ENCODE measurements at regions of chr22 and their contacts with region 1.

Region 1: DNA sequence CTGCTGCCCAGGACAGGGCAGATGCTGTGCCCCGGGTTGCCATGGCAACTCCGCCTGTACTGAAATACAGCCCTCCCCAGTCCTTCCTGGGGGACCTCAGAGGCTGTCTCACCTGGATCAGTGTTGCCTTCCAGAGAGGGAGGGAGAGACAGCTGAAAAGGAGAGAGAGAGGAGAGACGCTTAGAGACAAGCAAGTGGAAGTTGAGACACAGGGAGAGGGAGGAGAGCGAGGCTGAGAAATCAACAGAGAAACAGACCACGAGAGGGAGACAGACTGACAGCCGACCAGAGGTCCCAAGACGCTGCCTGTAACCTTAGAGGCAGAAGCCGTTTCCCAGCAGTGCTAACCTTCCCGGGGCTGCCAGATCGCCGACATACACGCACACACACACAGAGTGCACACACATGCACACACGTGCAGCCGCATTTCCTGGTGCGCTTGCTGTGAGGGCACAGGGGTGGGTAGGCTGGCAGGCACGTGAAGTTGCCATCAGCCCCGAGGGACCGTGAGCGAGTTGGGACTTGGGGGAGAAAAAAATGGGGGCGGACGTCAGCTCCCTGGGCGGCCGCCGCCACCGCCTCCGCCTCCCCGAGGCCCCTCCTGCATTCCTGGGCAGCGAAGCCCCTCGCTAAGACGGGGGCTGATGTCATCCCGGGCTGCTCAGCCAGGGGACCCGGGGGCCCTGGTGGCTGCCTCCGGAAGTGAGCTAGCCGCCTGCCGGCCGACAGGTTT is 88.6 kb upstream of the CRYBB3 start:
- DNase-seq: no peak
- H3K4me3 ChIP-seq: peak overlapping the region; percentile 36 to 68 (median 64)
- H3K27ac ChIP-seq: peak overlapping the region; percentile 83 to 92 (median 87)
- H3K4me1 ChIP-seq: peaks cover 28 to 60% (median 40%) of the 10 kb centered on the region in 3 donors
- H3K27me3 ChIP-seq: no peaks in the 10 kb centered on the region
- CTCF ChIP-seq: peak; percentile 28 to 65 (median 53)
- POLR2A ChIP-seq: no peak

Region 2: DNA sequence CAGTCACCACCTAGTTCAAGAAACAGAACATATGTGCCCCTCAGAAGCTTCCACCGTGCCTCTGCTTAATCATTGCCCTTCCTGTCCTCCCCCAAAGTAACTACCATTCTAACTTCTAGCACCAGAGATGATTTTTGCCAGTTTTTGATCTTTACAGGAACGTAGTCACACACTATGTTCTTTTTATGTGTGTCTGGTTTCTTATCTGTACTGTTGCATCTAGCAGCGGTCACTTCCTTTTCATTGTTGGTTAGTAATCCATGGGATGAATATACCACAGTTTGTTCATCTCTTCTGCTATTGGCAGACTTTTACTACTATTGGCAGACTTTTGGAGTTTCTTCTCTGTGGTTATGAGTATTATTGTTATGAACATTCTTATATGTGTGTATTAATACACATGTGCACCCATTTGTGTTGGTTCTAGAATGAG is 805.7 kb before region 1 on chr22:
- intact Hi-C with region 1: no loop called
- DNase-seq: no peak
- H3K4me3 ChIP-seq: peak overlapping the region in 1 of 4 donors; percentile 3
- H3K27ac ChIP-seq: peak overlapping the region; percentile 56 to 86 (median 78)
- H3K4me1 ChIP-seq: peaks cover 32 to 73% (median 36%) of the 10 kb centered on the region in 3 donors
- H3K27me3 ChIP-seq: no peaks in the 10 kb centered on the region
- CTCF ChIP-seq: no peak
- POLR2A ChIP-seq: no peak

Region 3: DNA sequence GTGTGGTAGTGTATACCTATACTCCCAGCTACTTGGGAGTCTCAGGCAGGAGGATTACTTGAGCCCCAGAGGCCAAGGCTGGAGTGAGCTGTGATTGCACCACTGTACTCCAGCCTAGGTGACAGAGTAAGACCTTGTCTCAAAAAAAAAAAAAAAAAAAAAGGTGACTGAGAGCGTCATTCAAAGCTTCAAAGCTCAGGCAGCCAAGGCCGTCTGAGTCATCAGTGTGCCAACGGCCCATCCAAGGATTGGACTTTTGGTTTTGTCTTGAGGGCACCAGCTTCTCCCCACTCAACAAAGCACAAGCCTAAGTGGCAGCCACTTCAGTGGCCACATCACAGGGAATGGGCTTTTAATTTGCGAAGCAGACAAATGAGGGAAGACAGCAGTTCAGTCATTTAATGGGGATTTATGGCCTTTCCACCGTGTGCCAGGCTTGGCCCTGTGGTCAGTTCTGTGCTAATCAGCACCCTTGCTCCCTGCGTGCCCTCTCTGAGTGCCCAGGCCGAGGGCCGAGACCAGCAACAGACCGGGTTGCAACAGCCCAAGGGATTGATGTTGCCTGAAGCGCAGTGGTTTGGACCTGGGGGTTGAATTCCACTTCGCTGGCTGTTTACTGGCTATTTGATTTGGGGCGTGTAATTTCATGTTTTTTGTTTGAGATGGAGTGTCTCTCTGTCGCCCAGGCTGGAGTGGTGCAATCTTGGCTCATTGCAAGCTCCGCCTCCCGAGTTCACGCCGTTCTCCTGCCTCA is 58.4 kb after region 1 on chr22:
- intact Hi-C with region 1: loop called (anchors 10 kb)
- DNase-seq: no peak
- H3K4me3 ChIP-seq: no peak overlapping the region
- H3K27ac ChIP-seq: peak overlapping the region; percentile 39 to 88 (median 68)
- H3K4me1 ChIP-seq: peaks cover 19 to 64% (median 27%) of the 10 kb centered on the region in 3 donors
- H3K27me3 ChIP-seq: no peaks in the 10 kb centered on the region
- CTCF ChIP-seq: no peak
- POLR2A ChIP-seq: no peak